GM12878 (cell line): ENCODE measurements at regions of chr12 and their contacts with region 1.

Region 1: DNA sequence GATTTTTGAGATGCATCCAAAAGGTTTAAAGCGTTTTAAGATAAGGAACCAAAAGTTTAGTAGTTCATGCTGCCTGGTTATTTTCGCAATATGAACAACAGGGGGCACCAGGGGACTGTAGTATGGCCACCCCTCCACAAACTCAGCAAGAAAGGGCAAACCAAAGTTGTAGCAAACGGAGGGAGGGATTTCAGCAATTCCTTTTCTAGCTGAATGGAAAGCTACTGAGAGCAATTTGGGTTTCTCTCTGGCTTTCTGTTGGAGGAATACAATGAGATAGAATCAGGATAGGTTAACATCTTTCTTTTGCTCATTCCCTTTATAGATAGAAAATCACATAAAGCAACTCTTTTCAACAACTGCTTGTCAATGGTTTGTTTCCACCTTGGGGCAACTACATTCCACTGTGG is 62.5 kb downstream of the DRAM1 start:
- DNase-seq: no peak
- ATAC-seq: peak; percentile 32
- H3K4me3 ChIP-seq: no peak overlapping the region
- H3K27ac ChIP-seq: peak overlapping the region; percentile 62
- H3K4me1 ChIP-seq: peaks cover 73% of the 10 kb centered on the region
- H3K27me3 ChIP-seq: no peaks in the 10 kb centered on the region
- CTCF ChIP-seq: peak; percentile 69 to 80 (median 70)
- EP300 ChIP-seq: no peak
- POLR2A ChIP-seq: no peak
- RAD21 ChIP-seq: peak; percentile 97

Region 2: DNA sequence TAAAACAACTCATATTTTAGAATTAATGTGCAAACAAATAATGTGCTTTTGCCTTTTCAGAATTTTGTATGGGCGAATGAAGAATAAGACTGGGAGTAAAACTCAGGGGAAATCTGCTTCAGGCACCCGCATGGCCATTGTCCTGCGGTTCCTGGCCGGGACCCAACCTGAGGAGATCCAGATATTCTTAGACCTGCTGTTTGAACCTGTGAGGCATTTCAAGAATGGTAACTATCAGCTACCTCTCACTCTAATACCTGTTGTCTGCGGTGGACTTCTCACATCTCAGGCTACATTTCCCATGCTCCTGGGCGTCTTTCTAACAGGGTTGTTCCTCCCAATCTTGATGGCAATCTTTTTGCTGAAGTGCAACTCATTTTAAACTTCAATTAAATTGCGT is 612.8 kb before region 1 on chr12:
- CTCF ChIA-PET with region 1: no interaction called
- POLR2A ChIA-PET with region 1: no interaction called
- RAD21 ChIA-PET with region 1: no interaction called
- SMC1A ChIA-PET with region 1: no interaction called
- in situ Hi-C with region 1: no loop called
- intact Hi-C with region 1: no loop called
- DNase-seq: no peak
- ATAC-seq: no peak
- H3K4me3 ChIP-seq: no peak overlapping the region
- H3K27ac ChIP-seq: no peak overlapping the region
- H3K4me1 ChIP-seq: no peaks in the 10 kb centered on the region
- H3K27me3 ChIP-seq: no peaks in the 10 kb centered on the region
- CTCF ChIP-seq: no peak
- EP300 ChIP-seq: no peak
- POLR2A ChIP-seq: no peak
- RAD21 ChIP-seq: no peak

Region 3: DNA sequence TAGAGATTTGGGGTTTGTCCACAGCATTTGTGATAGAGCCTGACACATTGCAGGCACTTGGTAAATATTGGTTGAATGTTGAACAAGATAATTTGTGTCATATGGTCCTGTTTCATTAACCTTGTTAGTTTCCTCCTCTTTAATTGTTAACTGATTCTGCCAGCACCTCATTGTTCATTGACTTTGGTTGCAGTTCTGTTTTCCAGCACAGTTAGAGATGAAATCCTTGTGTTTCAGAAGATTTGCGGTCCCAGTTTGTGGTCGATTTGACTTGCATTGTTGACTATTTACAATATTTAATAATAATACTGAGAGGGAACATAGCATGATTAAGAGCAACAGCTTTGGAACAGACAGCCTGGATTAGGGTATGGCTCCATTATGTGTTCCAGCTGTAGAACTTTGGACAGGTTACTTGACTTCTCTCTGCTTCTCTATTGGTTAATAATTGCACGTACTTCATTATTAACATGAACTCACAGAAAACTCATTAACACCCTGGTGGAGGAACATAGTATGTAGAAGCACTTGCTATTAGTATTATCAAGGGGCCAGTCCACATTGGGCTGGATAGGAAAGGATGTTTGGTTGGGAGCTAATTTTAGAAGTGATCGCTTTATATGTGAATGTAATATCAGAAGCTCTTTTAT is 53.8 kb before region 1 on chr12:
- CTCF ChIA-PET with region 1: interaction called, 5 read pairs
- POLR2A ChIA-PET with region 1: interaction called, 4 read pairs
- RAD21 ChIA-PET with region 1: no interaction called
- SMC1A ChIA-PET with region 1: interaction called, 18 read pairs
- in situ Hi-C with region 1: no loop called
- intact Hi-C with region 1: no loop called
- DNase-seq: no peak
- ATAC-seq: peak; percentile 68
- H3K4me3 ChIP-seq: 0 out of 2 replicates have a peak overlapping the region, but pooled peaks have one; percentile 32
- H3K27ac ChIP-seq: no peak overlapping the region
- H3K4me1 ChIP-seq: peaks cover 4% of the 10 kb centered on the region; the same call in 1 of the 2 replicates
- H3K27me3 ChIP-seq: no peaks in the 10 kb centered on the region
- CTCF ChIP-seq: no peak
- EP300 ChIP-seq: no peak
- POLR2A ChIP-seq: no peak
- RAD21 ChIP-seq: no peak

Region 4: GRCh38 chr12:102010265-102010994 is 70.6 kb after region 1 on chr12:
- CTCF ChIA-PET with region 1: interaction called, 3 read pairs
- POLR2A ChIA-PET with region 1: interaction called, 5 read pairs
- RAD21 ChIA-PET with region 1: interaction called, 5 read pairs
- SMC1A ChIA-PET with region 1: interaction called, 7 read pairs
- in situ Hi-C with region 1: no loop called
- intact Hi-C with region 1: loop called (anchors 5 kb)
- DNase-seq: peak; percentile 84
- ATAC-seq: peak; percentile 98
- H3K4me3 ChIP-seq: peak overlapping the region; percentile 42; the same call in 1 of the 2 replicates
- H3K27ac ChIP-seq: peak overlapping the region; percentile 93
- H3K4me1 ChIP-seq: peaks cover 21% of the 10 kb centered on the region
- H3K27me3 ChIP-seq: no peaks in the 10 kb centered on the region
- CTCF ChIP-seq: no peak
- EP300 ChIP-seq: no peak
- POLR2A ChIP-seq: peak; percentile 63
- RAD21 ChIP-seq: no peak

Region 5: GRCh38 chr12:102169922-102170621 is 230.2 kb after region 1 on chr12:
- CTCF ChIA-PET with region 1: interaction called, 11 read pairs
- POLR2A ChIA-PET with region 1: no interaction called
- RAD21 ChIA-PET with region 1: interaction called, 10 read pairs
- SMC1A ChIA-PET with region 1: interaction called, 10 read pairs
- in situ Hi-C with region 1: no loop called
- intact Hi-C with region 1: no loop called
- DNase-seq: no peak
- ATAC-seq: peak; percentile 73
- H3K4me3 ChIP-seq: no peak overlapping the region
- H3K27ac ChIP-seq: no peak overlapping the region
- H3K4me1 ChIP-seq: peaks cover 5% of the 10 kb centered on the region
- H3K27me3 ChIP-seq: no peaks in the 10 kb centered on the region
- CTCF ChIP-seq: peak; percentile 72 to 79 (median 78)
- EP300 ChIP-seq: no peak
- POLR2A ChIP-seq: no peak
- RAD21 ChIP-seq: peak; percentile 80

Region 6: GRCh38 chr12:102484428-102484958 is 544.6 kb after region 1 on chr12:
- CTCF ChIA-PET with region 1: interaction called, 33 read pairs
- POLR2A ChIA-PET with region 1: interaction called, 3 read pairs
- RAD21 ChIA-PET with region 1: interaction called, 13 read pairs
- SMC1A ChIA-PET with region 1: interaction called, 10 read pairs
- in situ Hi-C with region 1: no loop called
- intact Hi-C with region 1: loop called (anchors 2 kb)
- DNase-seq: peak; percentile 84
- ATAC-seq: peak; percentile 80
- H3K4me3 ChIP-seq: peak overlapping the region; percentile 48
- H3K27ac ChIP-seq: peak overlapping the region; percentile 100
- H3K4me1 ChIP-seq: peaks cover 54% of the 10 kb centered on the region
- H3K27me3 ChIP-seq: no peaks in the 10 kb centered on the region
- CTCF ChIP-seq: peak; percentile 79 to 91 (median 81)
- EP300 ChIP-seq: peak; percentile 87 to 90; a peak in 3 of 4 replicates
- POLR2A ChIP-seq: peak; percentile 43; the same call in 1 of the 2 replicates
- RAD21 ChIP-seq: peak; percentile 80

Region 7: GRCh38 chr12:102735104-102735503 is 795.2 kb after region 1 on chr12:
- CTCF ChIA-PET with region 1: interaction called, 38 read pairs
- POLR2A ChIA-PET with region 1: interaction called, 4 read pairs
- RAD21 ChIA-PET with region 1: interaction called, 36 read pairs
- SMC1A ChIA-PET with region 1: interaction called, 52 read pairs
- in situ Hi-C with region 1: loop called (anchors 10 kb)
- intact Hi-C with region 1: no loop called
- DNase-seq: peak; percentile 75
- ATAC-seq: peak; percentile 99
- H3K4me3 ChIP-seq: no peak overlapping the region
- H3K27ac ChIP-seq: peak overlapping the region; percentile 63
- H3K4me1 ChIP-seq: peaks cover 2% of the 10 kb centered on the region
- H3K27me3 ChIP-seq: no peaks in the 10 kb centered on the region
- CTCF ChIP-seq: no peak
- EP300 ChIP-seq: peak in 1 of 2 experiments; percentile 64; a peak in 1 of 4 replicates
- POLR2A ChIP-seq: no peak
- RAD21 ChIP-seq: no peak

Region 8: GRCh38 chr12:102811110-102811737 is 871.4 kb after region 1 on chr12:
- CTCF ChIA-PET with region 1: interaction called, 29 read pairs
- POLR2A ChIA-PET with region 1: no interaction called
- RAD21 ChIA-PET with region 1: interaction called, 7 read pairs
- SMC1A ChIA-PET with region 1: interaction called, 11 read pairs
- in situ Hi-C with region 1: no loop called
- intact Hi-C with region 1: no loop called
- DNase-seq: no peak
- ATAC-seq: peak; percentile 74
- H3K4me3 ChIP-seq: no peak overlapping the region
- H3K27ac ChIP-seq: no peak overlapping the region
- H3K4me1 ChIP-seq: no peaks in the 10 kb centered on the region
- H3K27me3 ChIP-seq: no peaks in the 10 kb centered on the region; a peak in 1 of 4 replicates
- CTCF ChIP-seq: peak; percentile 63 to 66 (median 64); a peak in 5 of 6 replicates
- EP300 ChIP-seq: no peak
- POLR2A ChIP-seq: no peak
- RAD21 ChIP-seq: peak; percentile 77